ENCODE measurements at regions of chr4 and their contacts with region 1.

Region 1: GRCh38 chr4:183304071-183304470 is 16.0 kb downstream of the CLDN22 start:
- DNase-seq: no peak
- H3K4me3 ChIP-seq: no peak overlapping the region
- H3K27ac ChIP-seq: no peak overlapping the region
- H3K4me1 ChIP-seq: no peaks in the 10 kb centered on the region
- H3K27me3 ChIP-seq: no peaks in the 10 kb centered on the region
- CTCF ChIP-seq: no peak

Region 2: DNA sequence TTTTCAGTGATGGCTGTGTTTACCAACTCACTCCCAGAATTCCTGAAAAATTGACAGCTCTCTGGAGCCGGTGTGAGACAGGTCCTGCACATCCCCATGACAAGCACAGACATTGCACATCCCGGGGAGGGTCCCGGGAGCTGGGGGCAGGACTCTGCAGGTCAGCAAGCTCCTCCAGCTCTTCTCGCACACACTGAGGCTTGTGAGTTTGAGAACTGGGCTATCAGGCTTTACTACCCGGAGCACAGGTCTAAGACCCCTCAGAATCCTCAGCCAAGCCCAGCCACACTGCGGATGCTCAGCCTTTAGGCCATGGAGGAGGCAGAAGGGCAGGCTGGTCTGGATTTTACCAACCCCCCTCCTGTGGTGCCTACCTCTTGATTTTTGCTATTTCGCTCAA is 23.8 kb after region 1 on chr4:
- CTCF ChIA-PET with region 1: no interaction called
- POLR2A ChIA-PET with region 1: interaction called, 14 read pairs
- intact Hi-C with region 1: no loop called
- DNase-seq: no peak
- H3K4me3 ChIP-seq: no peak overlapping the region
- H3K27ac ChIP-seq: no peak overlapping the region
- H3K4me1 ChIP-seq: no peaks in the 10 kb centered on the region
- H3K27me3 ChIP-seq: no peaks in the 10 kb centered on the region
- CTCF ChIP-seq: no peak

Region 3: DNA sequence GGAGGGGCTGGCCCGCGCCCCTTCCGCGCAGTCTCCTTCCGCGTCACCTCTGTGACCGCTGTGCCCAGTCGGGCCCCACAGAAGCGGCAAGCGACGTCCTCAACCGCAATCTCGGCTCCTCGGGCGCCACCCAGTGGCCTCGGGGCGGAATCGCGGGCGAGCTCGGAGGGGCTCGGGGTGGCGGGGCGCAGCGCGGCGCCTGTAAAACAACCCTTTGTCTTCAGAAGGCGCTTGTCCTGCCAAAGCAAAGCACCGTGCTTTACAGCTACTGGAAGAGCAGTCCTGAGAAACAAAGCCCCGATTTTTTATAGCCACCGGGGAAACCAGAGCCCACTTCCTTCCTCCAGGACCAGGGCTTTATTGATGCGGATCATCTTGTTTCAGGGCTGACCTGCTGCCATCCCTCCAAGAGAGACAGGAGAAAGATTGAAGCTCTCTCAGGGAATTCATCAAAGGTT is 103.1 kb after region 1 on chr4:
- CTCF ChIA-PET with region 1: no interaction called
- POLR2A ChIA-PET with region 1: interaction called, 15 read pairs
- intact Hi-C with region 1: no loop called
- DNase-seq: peak; percentile 93
- H3K4me3 ChIP-seq: peak overlapping the region; percentile 54
- H3K27ac ChIP-seq: peak overlapping the region; percentile 81
- H3K4me1 ChIP-seq: peaks cover 27% of the 10 kb centered on the region
- H3K27me3 ChIP-seq: no peaks in the 10 kb centered on the region
- CTCF ChIP-seq: peak; percentile 96

Region 4: GRCh38 chr4:183636923-183637322 is 332.9 kb after region 1 on chr4:
- CTCF ChIA-PET with region 1: no interaction called
- POLR2A ChIA-PET with region 1: no interaction called
- intact Hi-C with region 1: no loop called
- DNase-seq: no peak
- H3K4me3 ChIP-seq: no peak overlapping the region
- H3K27ac ChIP-seq: no peak overlapping the region
- H3K4me1 ChIP-seq: no peaks in the 10 kb centered on the region
- H3K27me3 ChIP-seq: no peaks in the 10 kb centered on the region
- CTCF ChIP-seq: no peak

Measured in A673 (cell line).